ENCODE measurements at regions of chr1 and their contacts with region 1.

Region 1: GRCh38 chr1:87600850-87601248 is 272.2 kb downstream of the LMO4 start:
- DNase-seq: no peak
- ATAC-seq: no peak

Region 2: GRCh38 chr1:87642581-87643221 is 41.9 kb after region 1 on chr1:
- intact Hi-C with region 1: no loop called
- DNase-seq: no peak
- ATAC-seq: no peak

Region 3: GRCh38 chr1:88237058-88237457 is 636.2 kb after region 1 on chr1:
- intact Hi-C with region 1: loop called (anchors 5 kb)
- DNase-seq: no peak
- ATAC-seq: no peak

Region 4: DNA sequence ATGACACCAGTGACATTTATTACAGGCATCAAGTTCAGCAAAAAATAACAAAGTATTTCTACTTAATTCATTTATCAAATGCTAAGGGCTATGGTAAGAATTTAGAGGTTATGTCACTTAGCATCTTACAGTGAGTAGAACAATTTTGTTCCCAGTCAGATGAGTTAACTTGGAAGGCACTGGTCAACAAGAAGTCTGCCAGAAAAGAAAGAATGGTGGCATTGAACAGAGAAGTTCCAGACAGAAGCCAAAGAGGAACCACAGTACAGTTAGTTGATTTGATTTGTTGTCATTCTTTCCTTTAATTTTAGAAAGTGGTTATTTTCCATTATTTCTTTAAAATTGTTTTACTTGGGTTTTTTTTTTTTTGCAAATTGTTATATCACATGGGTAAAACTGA is 851.0 kb after region 1 on chr1:
- intact Hi-C with region 1: no loop called
- DNase-seq: no peak
- ATAC-seq: peak; percentile 46

Region 5: GRCh38 chr1:88581703-88582102 is 980.9 kb after region 1 on chr1:
- intact Hi-C with region 1: loop called (anchors 5 kb)
- DNase-seq: no peak
- ATAC-seq: no peak

Measured in sciatic nerve (tissue), 2 donors.